Posterior cingulate gyrus (tissue), 11 donors: ENCODE measurements at regions of chr11 and their contacts with region 1.

Region 1: DNA sequence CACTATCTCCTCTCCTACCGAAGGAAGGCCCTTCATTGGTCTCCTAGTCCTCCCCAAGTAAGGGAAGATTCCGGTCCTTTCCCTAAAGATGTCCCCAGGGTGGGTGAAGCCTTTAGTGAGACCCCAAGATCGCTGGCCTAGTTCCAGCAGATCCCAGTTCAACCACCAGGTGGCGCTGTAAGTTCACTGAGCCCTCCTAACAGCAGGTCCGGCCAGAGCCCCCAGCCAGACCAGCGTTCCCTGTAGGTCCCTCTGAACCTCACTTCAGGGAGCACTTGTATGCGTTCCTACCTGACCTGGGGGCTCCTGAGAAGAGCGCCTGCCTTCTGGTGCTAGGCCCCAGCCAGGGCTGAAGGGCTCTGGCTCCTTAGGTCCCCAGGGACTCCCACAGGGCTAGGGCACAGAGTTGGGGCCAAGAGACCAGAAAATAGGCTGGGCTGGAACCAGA is 38.1 kb downstream of the LMO1 start:
- DNase-seq: peak; percentile 59 to 96 (median 82)

Region 2: DNA sequence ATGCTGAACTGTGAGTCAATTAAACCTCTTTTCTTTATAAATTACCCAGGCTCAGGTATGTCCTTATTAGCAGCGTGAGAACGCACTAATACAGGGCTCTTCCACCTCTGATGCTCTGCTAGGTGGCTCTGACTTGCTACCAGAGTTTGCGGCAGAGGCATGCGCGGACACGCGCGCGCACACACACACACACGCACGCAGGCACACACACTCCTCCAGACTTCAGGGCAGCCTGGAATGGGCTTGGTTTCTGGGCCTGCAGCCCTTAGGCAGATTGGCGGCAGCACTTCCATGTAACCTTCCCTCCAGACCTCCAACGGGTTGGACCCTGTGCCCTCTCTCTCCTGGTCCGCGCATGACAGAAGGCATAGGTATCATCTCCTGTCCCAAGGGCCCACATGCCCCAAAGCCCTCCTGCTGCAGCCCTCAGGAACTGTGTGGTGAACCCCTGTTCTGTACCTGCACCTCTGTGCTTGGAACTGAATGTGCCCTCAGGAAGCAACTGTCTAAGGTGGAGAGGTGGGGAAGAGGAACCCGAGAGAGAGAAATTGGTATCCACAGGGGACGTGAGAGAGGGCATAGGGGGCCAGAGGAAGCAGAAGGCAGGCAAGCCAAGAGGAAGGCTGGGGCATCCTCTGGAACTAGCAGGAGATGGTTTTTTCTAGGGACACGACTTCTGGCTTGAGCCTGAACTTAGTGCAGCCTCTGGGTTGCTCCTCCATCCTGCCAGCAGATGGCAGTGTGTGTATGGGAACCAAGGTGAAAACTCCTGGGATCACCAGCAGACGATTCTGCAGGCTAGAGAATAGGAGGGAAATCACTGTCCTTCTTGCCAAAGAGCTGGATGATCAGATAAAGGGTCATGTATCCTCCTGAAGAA is 33.4 kb before region 1 on chr11:
- intact Hi-C with region 1: loop called (anchors 5 kb)
- DNase-seq: peak; percentile 47 to 95 (median 80)

Region 3: DNA sequence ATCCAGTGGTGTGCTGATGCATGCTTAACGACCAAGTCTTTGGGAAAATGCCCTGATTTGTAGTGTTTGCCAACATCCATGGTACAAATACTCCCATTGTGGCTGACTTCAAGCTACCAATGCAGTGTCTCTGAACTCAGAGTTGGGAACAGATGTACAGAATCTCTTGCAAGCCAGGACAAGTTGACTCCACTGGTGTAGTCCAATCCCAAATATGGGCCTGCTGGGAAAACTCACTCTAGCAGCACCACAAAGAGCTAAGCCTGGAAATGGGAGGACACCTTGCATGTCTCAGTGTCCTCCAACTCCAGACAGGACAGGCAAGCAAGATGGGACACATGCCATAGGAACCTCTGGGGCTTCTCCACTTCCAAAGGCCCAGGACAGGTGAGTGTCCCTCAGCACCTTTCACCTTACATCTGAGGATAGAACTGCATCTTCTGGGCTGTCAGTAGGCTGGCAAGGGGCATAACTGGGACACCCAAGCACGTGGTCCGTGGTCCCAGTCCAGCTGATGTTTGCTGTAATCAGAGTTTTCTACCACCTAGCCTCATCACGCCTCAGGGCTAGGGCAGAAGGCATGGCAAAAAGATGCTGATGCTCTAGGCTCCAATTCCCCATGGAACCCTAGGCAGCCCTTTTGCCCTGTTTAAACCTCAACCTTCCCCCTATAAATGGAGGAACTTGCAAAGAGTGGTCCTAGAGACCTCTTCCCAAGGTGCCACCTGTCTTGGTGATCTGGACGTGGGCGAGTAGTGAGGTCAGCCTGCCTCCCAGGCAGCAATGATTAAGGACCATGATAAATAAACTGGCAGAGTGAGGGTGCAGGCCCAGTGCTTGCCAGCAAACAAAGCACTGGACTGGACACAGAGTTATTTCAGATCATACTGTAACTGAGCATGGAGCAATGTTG is 31.6 kb after region 1 on chr11:
- intact Hi-C with region 1: loop called (anchors 2 kb)
- DNase-seq: peak in 4 of 10 donors; percentile 1 to 66 (median 24)

Region 4: DNA sequence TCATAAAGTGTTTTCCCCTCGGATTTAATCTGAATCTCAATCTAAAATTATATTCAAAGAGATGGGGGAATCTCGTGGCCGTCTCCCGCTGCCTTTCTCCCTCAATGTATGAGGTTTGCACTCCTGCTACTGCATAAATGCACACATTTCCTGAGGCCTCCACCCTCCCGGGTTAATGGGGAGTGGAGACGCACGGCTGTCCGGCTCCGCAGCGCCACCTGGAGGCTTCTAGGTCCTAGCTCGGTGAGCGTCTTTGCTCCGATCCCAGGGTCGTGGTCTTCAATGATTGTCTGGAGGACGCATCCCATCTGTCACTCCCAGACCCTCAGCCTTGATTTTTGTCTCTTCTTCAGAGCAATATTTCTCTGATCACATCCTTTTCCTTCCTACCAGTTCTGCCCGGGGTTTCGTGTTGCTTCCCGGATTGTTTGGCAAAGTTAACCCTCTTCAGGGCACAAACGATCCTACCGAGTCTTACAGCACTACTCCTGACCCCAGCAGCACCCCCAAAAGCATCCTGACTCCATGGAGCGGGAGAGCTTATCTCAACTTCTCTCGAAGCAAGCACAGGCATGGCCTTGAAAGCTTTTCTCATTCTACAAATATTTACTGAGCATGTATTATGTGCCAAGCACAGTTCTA is 38.3 kb after region 1 on chr11 and contains the start of gene LMO1:
- intact Hi-C with region 1: loop called (anchors 1 kb)
- DNase-seq: peak; percentile 58 to 97 (median 87)

Region 5: GRCh38 chr11:8276528-8276927 is 50.9 kb after region 1 on chr11:
- intact Hi-C with region 1: no loop called
- DNase-seq: no peak

Region 6: GRCh38 chr11:8566613-8567210 is 341.1 kb after region 1 on chr11:
- intact Hi-C with region 1: loop called (anchors 1 kb)
- DNase-seq: no peak